Activated CD4-positive, alpha-beta memory T cell treated with anti-CD3 and anti-CD28 coated beads for 36 hours (primary cell): ENCODE measurements at regions of chr2 and their contacts with region 1.

Region 1: GRCh38 chr2:15577071-15577735 is 14.5 kb upstream of the DDX1 start:
- DNase-seq: peak; percentile 92
- H3K4me3 Mint-ChIP-seq: no peak overlapping the region
- H3K27ac Mint-ChIP-seq: no peak overlapping the region
- H3K4me1 Mint-ChIP-seq: no peaks in the 10 kb centered on the region
- H3K27me3 Mint-ChIP-seq: peaks cover 2% of the 10 kb centered on the region

Region 2: GRCh38 chr2:14903709-14904374 is 673.4 kb before region 1 on chr2:
- CTCF ChIA-PET with region 1: interaction called, 4 read pairs
- POLR2A ChIA-PET with region 1: no interaction called
- intact Hi-C with region 1: loop called (anchors 2 kb)
- DNase-seq: peak; percentile 71
- H3K4me3 Mint-ChIP-seq: no peak overlapping the region
- H3K27ac Mint-ChIP-seq: no peak overlapping the region
- H3K4me1 Mint-ChIP-seq: no peaks in the 10 kb centered on the region
- H3K27me3 Mint-ChIP-seq: no peaks in the 10 kb centered on the region

Region 3: DNA sequence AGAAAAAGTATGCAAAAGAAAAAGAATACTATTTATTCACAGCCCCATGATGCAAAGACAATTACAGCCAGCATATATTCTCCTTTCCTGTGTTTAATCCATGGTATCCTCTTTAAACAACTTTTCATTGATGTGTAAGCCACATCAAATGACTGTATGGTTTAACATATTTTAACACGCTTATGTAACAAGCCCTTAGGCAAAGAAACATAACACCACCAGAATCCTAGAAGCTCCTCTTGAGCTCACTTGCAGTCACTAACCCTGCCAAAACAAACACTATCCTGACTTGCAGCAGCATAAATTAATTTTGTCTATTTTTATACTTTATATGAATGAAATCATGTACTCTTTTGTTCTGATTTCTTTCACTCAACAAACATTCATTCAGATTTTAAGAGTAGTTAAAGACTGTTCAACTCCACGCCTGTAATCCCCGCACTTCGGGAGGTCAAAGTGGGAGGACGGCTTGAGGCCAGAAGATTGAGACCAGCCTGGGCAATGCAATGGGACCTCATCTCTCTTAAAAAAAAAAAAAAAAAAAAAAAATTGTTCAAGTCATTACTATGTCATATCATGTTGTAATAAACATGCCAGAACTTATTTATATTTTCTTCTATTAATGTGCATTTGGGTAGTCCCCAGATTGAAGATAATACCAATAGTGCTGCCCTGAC is 242.4 kb before region 1 on chr2:
- CTCF ChIA-PET with region 1: no interaction called
- POLR2A ChIA-PET with region 1: no interaction called
- intact Hi-C with region 1: no loop called
- DNase-seq: no peak
- H3K4me3 Mint-ChIP-seq: no peak overlapping the region
- H3K27ac Mint-ChIP-seq: no peak overlapping the region
- H3K4me1 Mint-ChIP-seq: peaks cover 7% of the 10 kb centered on the region
- H3K27me3 Mint-ChIP-seq: no peaks in the 10 kb centered on the region

Region 4: GRCh38 chr2:15546297-15547098 is 30.7 kb before region 1 on chr2:
- CTCF ChIA-PET with region 1: interaction called, 13 read pairs
- POLR2A ChIA-PET with region 1: no interaction called
- intact Hi-C with region 1: no loop called
- DNase-seq: no peak
- H3K4me3 Mint-ChIP-seq: no peak overlapping the region
- H3K27ac Mint-ChIP-seq: no peak overlapping the region
- H3K4me1 Mint-ChIP-seq: no peaks in the 10 kb centered on the region
- H3K27me3 Mint-ChIP-seq: no peaks in the 10 kb centered on the region

Region 5: GRCh38 chr2:15591692-15592463 is 14.7 kb after region 1 on chr2 and contains the start of gene DDX1:
- CTCF ChIA-PET with region 1: interaction called, 14 read pairs
- POLR2A ChIA-PET with region 1: no interaction called
- intact Hi-C with region 1: no loop called
- DNase-seq: peak; percentile 91
- H3K4me3 Mint-ChIP-seq: peak within 1 kb of the TSS; percentile 94
- H3K27ac Mint-ChIP-seq: peak within 1 kb of the TSS; percentile 91
- H3K4me1 Mint-ChIP-seq: peaks cover 29% of the 10 kb centered on the region
- H3K27me3 Mint-ChIP-seq: no peaks in the 10 kb centered on the region
- total RNA-seq, gene DDX1: 79.7 to 81.1 TPM